ENCODE measurements at regions of chr1 and their contacts with region 1.

Region 1: GRCh38 chr1:6343506-6344405 is 49.8 kb downstream of the ACOT7 start:
- DNase-seq: peak; percentile 31 to 92
- H3K4me3 ChIP-seq: no peak overlapping the region
- H3K27ac ChIP-seq: no peak overlapping the region
- H3K4me1 ChIP-seq: peaks cover 3 to 7% (median 6%) of the 10 kb centered on the region in 4 experiments; a peak in 5 of 7 replicates
- H3K27me3 ChIP-seq: no peaks in the 10 kb centered on the region
- CTCF ChIP-seq: peak in 2 of 3 experiments; percentile 97 to 100; a peak in 3 of 4 replicates
- EP300 ChIP-seq: no peak
- POLR2A ChIP-seq: no peak
- RAD21 ChIP-seq: peak; percentile 99

Region 2: GRCh38 chr1:6222636-6223035 is 121.1 kb before region 1 on chr1:
- CTCF ChIA-PET with region 1: no interaction called
- POLR2A ChIA-PET with region 1: no interaction called
- DNase-seq: no peak
- H3K4me3 ChIP-seq: no peak overlapping the region
- H3K27ac ChIP-seq: no peak overlapping the region
- H3K4me1 ChIP-seq: no peaks in the 10 kb centered on the region; a peak in 1 of 7 replicates
- H3K27me3 ChIP-seq: no peaks in the 10 kb centered on the region
- CTCF ChIP-seq: no peak
- EP300 ChIP-seq: no peak
- POLR2A ChIP-seq: no peak
- RAD21 ChIP-seq: no peak

Region 3: DNA sequence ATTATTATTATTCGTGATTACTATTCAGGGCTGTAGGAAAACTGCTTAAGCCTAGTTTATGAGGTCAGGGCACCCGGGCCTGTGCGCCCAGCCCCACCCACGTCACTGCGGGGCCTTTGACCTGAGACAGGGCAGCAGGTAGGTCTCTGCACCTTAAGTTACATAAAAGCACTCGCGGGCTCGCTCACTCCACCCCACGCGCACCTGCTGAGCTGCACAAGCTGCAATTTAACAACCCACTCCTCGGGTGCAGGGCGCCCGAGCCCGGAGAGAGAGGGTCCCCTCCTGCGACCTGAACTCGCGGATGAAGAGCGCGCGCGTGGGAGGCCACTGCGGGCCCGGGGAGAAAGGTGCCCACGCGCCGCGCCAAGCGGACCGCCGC is 108.5 kb before region 1 on chr1:
- CTCF ChIA-PET with region 1: interaction called, 25 read pairs
- POLR2A ChIA-PET with region 1: interaction called, 3 read pairs
- DNase-seq: no peak
- H3K4me3 ChIP-seq: peak overlapping the region; percentile 77 to 94 (median 86)
- H3K27ac ChIP-seq: peak overlapping the region; percentile 2; the same call in 1 of the 2 replicates
- H3K4me1 ChIP-seq: peaks cover 4 to 25% (median 19%) of the 10 kb centered on the region in 4 experiments
- H3K27me3 ChIP-seq: no peaks in the 10 kb centered on the region
- CTCF ChIP-seq: no peak
- EP300 ChIP-seq: no peak
- POLR2A ChIP-seq: no peak
- RAD21 ChIP-seq: no peak

Region 4: DNA sequence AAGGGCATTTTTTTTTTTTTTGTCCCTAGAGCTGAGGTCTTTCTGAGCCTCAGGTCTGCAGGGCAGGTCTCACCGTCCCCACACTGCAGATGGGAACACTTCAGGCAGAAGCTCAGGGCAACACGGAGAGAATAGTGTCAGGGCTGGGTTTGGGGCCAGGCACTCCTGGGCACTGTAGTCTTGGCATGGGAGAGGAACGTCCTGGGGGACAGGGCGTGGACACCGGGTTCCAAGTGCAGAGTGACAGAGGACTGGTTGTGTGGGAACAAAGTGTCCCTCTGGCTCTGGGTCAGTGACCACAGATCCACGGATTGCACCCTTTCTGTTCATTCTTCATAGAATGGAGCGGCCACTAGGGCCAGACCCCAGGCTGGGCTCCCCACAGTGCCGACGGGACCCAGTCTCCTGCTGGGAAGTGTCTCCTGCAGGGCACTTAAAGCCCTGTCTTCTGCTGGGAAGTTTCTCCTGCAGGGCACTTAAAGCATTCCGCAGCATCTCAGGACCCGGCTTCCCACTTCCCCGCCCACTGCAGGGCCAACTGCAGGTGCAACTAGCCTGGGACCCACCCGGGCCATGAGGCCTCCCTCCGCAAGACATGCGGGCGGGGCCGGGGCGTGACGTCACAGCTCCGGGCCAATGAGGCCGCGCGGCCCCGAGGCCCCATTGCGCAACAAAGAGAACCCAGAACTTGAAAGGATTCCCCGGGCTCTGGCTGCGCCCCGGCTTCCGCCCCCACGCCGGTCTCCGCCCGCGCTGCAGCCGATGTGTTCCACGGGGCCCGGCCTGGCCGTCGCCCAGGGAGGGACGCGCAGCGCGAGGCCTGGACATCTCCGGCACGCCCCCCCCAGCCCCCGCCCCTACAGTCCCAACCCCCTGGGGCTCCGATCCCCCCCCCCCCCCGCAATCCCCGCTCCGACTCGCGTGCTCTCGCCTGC is 84.0 kb before region 1 on chr1:
- CTCF ChIA-PET with region 1: interaction called, 280 read pairs
- POLR2A ChIA-PET with region 1: no interaction called
- DNase-seq: peak in 1 of 2 experiments; percentile 91
- H3K4me3 ChIP-seq: peak overlapping the region; percentile 45 to 86 (median 50)
- H3K27ac ChIP-seq: no peak overlapping the region
- H3K4me1 ChIP-seq: peaks cover 0 to 13% (median 3%) of the 10 kb centered on the region in 4 experiments; a peak in 6 of 7 replicates
- H3K27me3 ChIP-seq: peaks cover 0 to 20% (median 13%) of the 10 kb centered on the region in 4 experiments; a peak in 3 of 7 replicates
- CTCF ChIP-seq: no peak
- EP300 ChIP-seq: no peak
- POLR2A ChIP-seq: no peak
- RAD21 ChIP-seq: no peak

Region 5: GRCh38 chr1:6275826-6276782 is 67.7 kb before region 1 on chr1:
- CTCF ChIA-PET with region 1: interaction called, 28 read pairs
- POLR2A ChIA-PET with region 1: no interaction called
- DNase-seq: no peak
- H3K4me3 ChIP-seq: no peak overlapping the region
- H3K27ac ChIP-seq: no peak overlapping the region
- H3K4me1 ChIP-seq: peaks cover 0 to 25% (median 13%) of the 10 kb centered on the region in 4 experiments; a peak in 6 of 7 replicates
- H3K27me3 ChIP-seq: no peaks in the 10 kb centered on the region
- CTCF ChIP-seq: no peak
- EP300 ChIP-seq: no peak
- POLR2A ChIP-seq: no peak
- RAD21 ChIP-seq: no peak

Region 6: GRCh38 chr1:6330410-6330911 is 13.3 kb before region 1 on chr1:
- CTCF ChIA-PET with region 1: interaction called, 54 read pairs
- POLR2A ChIA-PET with region 1: interaction called, 5 read pairs
- DNase-seq: no peak
- H3K4me3 ChIP-seq: no peak overlapping the region
- H3K27ac ChIP-seq: no peak overlapping the region
- H3K4me1 ChIP-seq: peaks cover 0 to 2% (median under 1%) of the 10 kb centered on the region in 4 experiments; a peak in 3 of 7 replicates
- H3K27me3 ChIP-seq: no peaks in the 10 kb centered on the region
- CTCF ChIP-seq: no peak
- EP300 ChIP-seq: no peak
- POLR2A ChIP-seq: no peak
- RAD21 ChIP-seq: no peak

Region 7: GRCh38 chr1:6401673-6402072 is 57.9 kb after region 1 on chr1:
- CTCF ChIA-PET with region 1: interaction called, 1,769 read pairs
- POLR2A ChIA-PET with region 1: interaction called, 4 read pairs
- DNase-seq: no peak
- H3K4me3 ChIP-seq: no peak overlapping the region
- H3K27ac ChIP-seq: no peak overlapping the region
- H3K4me1 ChIP-seq: no peaks in the 10 kb centered on the region
- H3K27me3 ChIP-seq: peaks cover 0 to 4% (median 2%) of the 10 kb centered on the region in 4 experiments; a peak in 4 of 7 replicates
- CTCF ChIP-seq: no peak
- EP300 ChIP-seq: no peak
- POLR2A ChIP-seq: no peak
- RAD21 ChIP-seq: no peak